Vagina (tissue), 2 donors: ENCODE measurements at regions of chr11 and their contacts with region 1.

Region 1: DNA sequence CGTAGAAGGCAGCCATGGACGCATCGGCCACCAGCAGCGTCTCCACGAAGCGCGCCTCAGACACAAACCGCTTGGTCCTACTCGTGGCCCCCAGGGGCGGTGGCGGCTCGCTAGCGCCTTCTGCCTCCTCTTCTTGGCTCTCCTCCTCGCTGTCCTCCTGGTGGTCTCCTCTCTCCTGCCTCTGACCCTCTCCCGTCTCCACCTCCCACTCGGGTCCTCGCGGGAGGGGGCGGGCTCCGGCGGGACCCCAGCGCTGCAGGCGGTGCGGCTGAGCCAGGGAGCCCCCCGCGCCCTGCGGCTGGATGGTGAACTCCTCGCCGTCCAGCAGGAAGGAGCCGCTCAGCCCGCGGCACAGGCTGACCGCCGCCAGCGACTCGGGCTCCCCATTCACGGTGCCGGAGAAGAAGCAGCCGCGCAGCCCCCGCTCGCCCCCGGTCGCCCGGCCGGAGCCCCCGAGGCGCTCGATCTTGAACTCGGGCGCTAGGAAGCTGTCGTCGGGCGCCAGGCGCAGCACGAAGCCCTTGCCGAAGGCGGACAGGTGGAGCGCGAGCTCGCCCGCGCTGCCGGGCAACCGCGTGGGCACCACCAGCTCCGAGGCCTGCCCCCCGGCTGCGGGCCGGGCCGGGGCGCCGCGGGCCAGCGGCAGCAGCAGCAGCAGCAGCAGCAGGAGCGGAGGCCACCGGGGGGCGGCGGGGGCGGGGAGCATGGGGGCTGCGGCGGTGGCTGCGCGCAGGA is 661 bp downstream of the ADAMTS8 start:
- DNase-seq: no peak
- H3K4me3 ChIP-seq: peak overlapping the region; percentile 36 to 65
- H3K27ac ChIP-seq: no peak overlapping the region
- H3K4me1 ChIP-seq: peaks cover 17% of the 10 kb centered on the region
- H3K27me3 ChIP-seq: no peaks in the 10 kb centered on the region
- CTCF ChIP-seq: no peak
- POLR2A ChIP-seq: no peak

Region 2: GRCh38 chr11:129440028-129440713 is 987.6 kb before region 1 on chr11:
- intact Hi-C with region 1: no loop called
- DNase-seq: no peak
- H3K4me3 ChIP-seq: no peak overlapping the region
- H3K27ac ChIP-seq: no peak overlapping the region
- H3K4me1 ChIP-seq: peaks cover 10% of the 10 kb centered on the region
- H3K27me3 ChIP-seq: no peaks in the 10 kb centered on the region
- CTCF ChIP-seq: no peak
- POLR2A ChIP-seq: no peak

Region 3: GRCh38 chr11:130213143-130213978 is 214.4 kb before region 1 on chr11:
- intact Hi-C with region 1: loop called (anchors 10 kb)
- DNase-seq: peak in 1 of 2 donors; percentile 77
- H3K4me3 ChIP-seq: no peak overlapping the region
- H3K27ac ChIP-seq: no peak overlapping the region
- H3K4me1 ChIP-seq: no peaks in the 10 kb centered on the region
- H3K27me3 ChIP-seq: no peaks in the 10 kb centered on the region
- CTCF ChIP-seq: peak; percentile 64 to 87 (median 74)
- POLR2A ChIP-seq: no peak

Region 4: DNA sequence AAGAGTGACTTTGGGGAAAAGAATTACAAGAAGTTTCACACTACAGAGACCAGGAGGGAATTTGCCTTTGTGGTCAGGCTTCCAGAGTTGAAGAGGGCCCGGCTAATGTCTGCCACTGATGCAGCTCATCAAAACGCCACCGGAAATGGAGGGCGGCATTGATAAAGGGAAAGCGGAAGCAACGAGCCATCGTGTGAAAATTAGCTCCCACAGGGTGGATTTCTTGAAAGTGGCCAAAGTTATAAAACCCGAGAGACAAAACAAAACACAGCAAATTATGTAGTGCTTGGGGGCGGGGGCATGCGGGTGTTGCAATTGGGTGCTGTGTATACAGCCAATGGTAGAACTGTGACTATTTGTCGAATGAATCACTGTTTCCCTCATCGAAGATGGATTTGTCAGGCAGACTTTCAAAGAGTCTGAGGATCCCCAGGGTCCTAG is 133.7 kb after region 1 on chr11:
- intact Hi-C with region 1: no loop called
- DNase-seq: no peak
- H3K4me3 ChIP-seq: no peak overlapping the region
- H3K27ac ChIP-seq: no peak overlapping the region
- H3K4me1 ChIP-seq: no peaks in the 10 kb centered on the region
- H3K27me3 ChIP-seq: no peaks in the 10 kb centered on the region
- CTCF ChIP-seq: no peak
- POLR2A ChIP-seq: no peak

Region 5: DNA sequence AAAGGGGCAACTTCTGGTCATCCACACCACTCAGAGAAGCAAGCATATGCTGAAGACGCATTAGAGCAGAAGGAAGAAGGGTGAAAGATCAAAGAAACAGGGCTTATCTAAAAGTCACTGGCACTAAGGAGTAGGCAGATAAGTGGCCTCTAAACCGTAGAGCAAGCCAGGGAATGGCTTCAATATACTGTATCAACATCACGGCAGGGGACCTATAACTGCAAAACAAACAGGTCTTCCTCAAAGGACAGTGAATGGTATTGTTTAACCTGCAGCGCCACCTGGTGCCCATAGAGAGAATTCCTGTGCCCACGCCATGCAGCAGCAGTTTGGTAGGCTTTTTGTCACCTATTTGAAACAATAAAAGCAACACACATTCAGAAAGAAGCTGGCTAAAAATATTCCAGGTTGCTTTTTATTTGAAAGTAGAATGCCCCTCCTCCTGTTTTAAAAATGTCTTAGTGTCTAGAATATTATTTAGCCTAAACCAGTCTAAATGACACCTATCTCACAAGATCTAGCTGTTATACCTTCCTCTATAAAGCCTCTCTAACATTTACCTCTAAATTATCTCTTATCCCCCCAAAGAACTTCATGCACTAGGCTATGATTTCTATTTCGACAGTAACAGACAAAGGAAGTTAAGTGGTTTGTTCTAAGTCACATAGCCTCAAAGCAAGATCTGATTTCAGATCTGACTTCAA is 466.7 kb after region 1 on chr11:
- intact Hi-C with region 1: loop called (anchors 1 kb)
- DNase-seq: no peak
- H3K4me3 ChIP-seq: no peak overlapping the region
- H3K27ac ChIP-seq: no peak overlapping the region
- H3K4me1 ChIP-seq: peaks cover 28% of the 10 kb centered on the region
- H3K27me3 ChIP-seq: no peaks in the 10 kb centered on the region
- CTCF ChIP-seq: peak; percentile 77 to 80 (median 77)
- POLR2A ChIP-seq: no peak